ENCODE measurements at regions of chr15 and their contacts with region 1.

Region 1: GRCh38 chr15:76139368-76140073 is 79.7 kb downstream of the TMEM266 start:
- DNase-seq: peak; percentile 56 to 78 (median 65)
- H3K4me3 ChIP-seq: peak overlapping the region in 1 of 3 experiments; percentile 36
- H3K4me3 Mint-ChIP-seq: peak overlapping the region in 1 of 2 donors; percentile 62
- H3K27ac ChIP-seq: no peak overlapping the region
- H3K27ac Mint-ChIP-seq: no peak overlapping the region
- H3K4me1 ChIP-seq: peaks cover 12 to 14% of the 10 kb centered on the region in 2 donors
- H3K4me1 Mint-ChIP-seq: peaks cover 17% of the 10 kb centered on the region
- H3K27me3 ChIP-seq: no peaks in the 10 kb centered on the region
- H3K27me3 Mint-ChIP-seq: peaks cover 2 to 8% (median 4%) of the 10 kb centered on the region in 3 donors
- CTCF ChIP-seq: peak; percentile 93

Region 2: DNA sequence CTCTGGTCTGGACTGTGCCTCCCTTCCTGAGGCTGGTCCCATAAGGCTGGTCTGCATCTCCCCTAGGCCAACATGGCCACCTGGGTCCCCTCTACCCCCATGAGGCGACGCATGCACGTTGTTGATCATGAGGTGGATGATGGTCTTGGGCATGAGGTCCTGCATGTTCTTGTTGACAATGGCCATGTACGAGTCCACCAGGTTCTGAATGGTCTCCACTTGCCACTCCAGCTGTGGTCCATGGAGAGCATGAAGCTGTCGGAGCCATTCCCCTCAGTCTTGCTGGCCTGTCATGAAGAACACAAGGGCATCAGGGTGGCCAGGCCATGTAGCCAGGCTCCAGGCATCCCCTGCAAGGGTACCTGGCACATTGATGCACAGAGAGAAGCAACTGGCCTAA is 399.7 kb before region 1 on chr15:
- intact Hi-C with region 1: no loop called
- DNase-seq: no peak
- H3K4me3 ChIP-seq: no peak overlapping the region
- H3K4me3 Mint-ChIP-seq: peak overlapping the region; percentile 27 to 96
- H3K27ac ChIP-seq: no peak overlapping the region
- H3K27ac Mint-ChIP-seq: peak overlapping the region in 4 of 7 donors; percentile 15 to 92 (median 82)
- H3K4me1 ChIP-seq: peaks cover 36 to 42% of the 10 kb centered on the region in 2 donors
- H3K4me1 Mint-ChIP-seq: peaks cover 35% of the 10 kb centered on the region
- H3K27me3 ChIP-seq: no peaks in the 10 kb centered on the region
- H3K27me3 Mint-ChIP-seq: peaks cover 5 to 11% (median 6%) of the 10 kb centered on the region in 3 donors
- CTCF ChIP-seq: no peak

Region 3: DNA sequence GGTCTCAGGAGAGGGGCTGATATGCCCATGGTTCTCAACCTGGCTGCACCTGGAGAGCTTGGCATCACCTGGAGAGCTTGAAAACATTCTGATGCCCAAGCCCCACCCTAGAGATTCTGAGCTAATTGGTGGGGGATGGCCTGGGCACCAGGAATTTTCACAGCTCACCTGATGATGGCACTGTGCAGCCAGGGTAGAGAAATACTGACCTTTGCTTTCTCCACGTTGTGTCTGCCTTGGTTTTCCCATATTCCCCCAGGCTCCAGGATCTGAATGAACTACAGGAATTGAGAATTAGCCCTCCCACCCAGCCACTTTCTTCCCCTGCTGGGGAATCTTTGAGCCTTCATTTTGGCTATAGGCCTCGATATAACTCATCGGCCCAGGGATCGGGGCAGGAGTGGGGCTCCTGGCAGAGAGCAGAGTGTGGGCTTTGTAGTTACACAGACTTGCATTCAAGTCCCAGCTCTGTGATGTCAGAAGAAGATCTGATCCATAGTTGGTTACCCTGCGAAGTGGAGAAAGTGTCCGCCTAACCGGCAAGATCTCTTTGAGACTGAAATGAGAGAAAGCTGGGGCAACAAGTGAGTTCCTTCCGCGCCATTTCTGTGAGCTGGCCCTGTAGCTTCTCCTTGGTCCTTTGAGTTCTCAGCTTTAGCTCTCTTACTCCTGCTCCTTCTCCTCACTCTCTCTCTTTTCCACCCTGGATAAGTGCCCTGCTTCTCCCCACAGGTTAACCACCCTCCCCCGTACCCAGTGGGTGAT is 329.4 kb before region 1 on chr15:
- intact Hi-C with region 1: loop called in 1 of 2 experiments (anchors 5 kb)
- DNase-seq: peak in 2 of 3 donors; percentile 7 to 23
- H3K4me3 ChIP-seq: no peak overlapping the region
- H3K4me3 Mint-ChIP-seq: no peak overlapping the region
- H3K27ac ChIP-seq: no peak overlapping the region
- H3K27ac Mint-ChIP-seq: no peak overlapping the region
- H3K4me1 ChIP-seq: no peaks in the 10 kb centered on the region
- H3K4me1 Mint-ChIP-seq: peaks cover 1% of the 10 kb centered on the region
- H3K27me3 ChIP-seq: no peaks in the 10 kb centered on the region
- H3K27me3 Mint-ChIP-seq: peaks cover 4 to 8% (median 5%) of the 10 kb centered on the region in 3 donors
- CTCF ChIP-seq: peak; percentile 34

Region 4: GRCh38 chr15:75928680-75929608 is 210.6 kb before region 1 on chr15:
- intact Hi-C with region 1: loop called in 1 of 2 experiments (anchors 5 kb)
- DNase-seq: no peak
- H3K4me3 ChIP-seq: no peak overlapping the region
- H3K4me3 Mint-ChIP-seq: no peak overlapping the region
- H3K27ac ChIP-seq: no peak overlapping the region
- H3K27ac Mint-ChIP-seq: peak overlapping the region in 1 of 7 donors; percentile 4
- H3K4me1 ChIP-seq: peaks cover 0 to 9% of the 10 kb centered on the region in 2 donors
- H3K4me1 Mint-ChIP-seq: peaks cover 13% of the 10 kb centered on the region
- H3K27me3 ChIP-seq: no peaks in the 10 kb centered on the region
- H3K27me3 Mint-ChIP-seq: no peaks in the 10 kb centered on the region
- CTCF ChIP-seq: peak; percentile 28

Region 5: GRCh38 chr15:76057332-76058000 is 82.1 kb before region 1 on chr15:
- intact Hi-C with region 1: loop called (anchors 2 to 5 kb)
- DNase-seq: peak; percentile 31 to 52 (median 51)
- H3K4me3 ChIP-seq: peak overlapping the region; percentile 48 to 85 (median 78)
- H3K4me3 Mint-ChIP-seq: peak overlapping the region; percentile 70 to 83
- H3K27ac ChIP-seq: peak overlapping the region in 1 of 2 donors; percentile 73
- H3K27ac Mint-ChIP-seq: peak overlapping the region in 4 of 7 donors; percentile 55 to 80 (median 76)
- H3K4me1 ChIP-seq: peaks cover 25 to 32% of the 10 kb centered on the region in 2 donors
- H3K4me1 Mint-ChIP-seq: peaks cover 31% of the 10 kb centered on the region
- H3K27me3 ChIP-seq: peaks cover 26 to 33% of the 10 kb centered on the region in 2 donors
- H3K27me3 Mint-ChIP-seq: peaks cover 22 to 38% (median 38%) of the 10 kb centered on the region in 3 donors
- CTCF ChIP-seq: peak; percentile 88

Measured in CD14-positive monocyte (primary cell).